WTC11 (cell line): ENCODE measurements at regions of chr2 and their contacts with region 1.

Region 1: DNA sequence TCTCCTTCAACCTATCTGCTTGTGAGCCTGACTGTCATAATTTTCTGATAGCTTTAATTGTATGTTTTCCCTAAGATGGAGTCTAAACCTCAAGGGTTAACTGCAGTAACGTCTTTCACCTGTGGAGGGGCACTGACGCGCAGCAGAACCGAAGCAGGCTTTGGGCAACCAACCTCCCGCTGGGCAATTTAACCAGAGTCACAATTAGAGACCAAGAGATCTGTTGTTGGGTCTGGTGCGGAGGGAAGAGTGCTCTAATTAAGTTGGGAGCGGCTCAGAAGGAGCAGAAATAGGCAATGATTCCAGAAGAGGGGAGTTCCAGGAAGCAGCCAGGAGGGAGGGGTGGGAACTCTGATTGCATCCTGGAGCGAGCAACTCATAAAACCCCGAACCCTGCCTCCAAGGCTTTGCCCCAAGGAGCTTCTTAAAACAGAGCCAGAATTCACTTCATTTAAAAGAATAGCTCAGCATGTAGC is 245.9 kb downstream of the PAX3 start:
- DNase-seq: peak; percentile 82
- ATAC-seq: peak; percentile 93
- H3K4me3 Mint-ChIP-seq: peak overlapping the region; percentile 29
- H3K27ac Mint-ChIP-seq: no peak overlapping the region
- H3K4me1 Mint-ChIP-seq: peaks cover 16% of the 10 kb centered on the region
- H3K27me3 Mint-ChIP-seq: peaks cover 100% of the 10 kb centered on the region
- CTCF ChIP-seq: peak; percentile 47

Region 2: GRCh38 chr2:222024932-222025880 is 27.7 kb before region 1 on chr2:
- CTCF ChIA-PET with region 1: interaction called, 36 read pairs
- POLR2A ChIA-PET with region 1: no interaction called
- DNase-seq: no peak
- ATAC-seq: peak; percentile 59
- H3K4me3 Mint-ChIP-seq: peak overlapping the region; percentile 42
- H3K27ac Mint-ChIP-seq: no peak overlapping the region
- H3K4me1 Mint-ChIP-seq: peaks cover 19% of the 10 kb centered on the region
- H3K27me3 Mint-ChIP-seq: peaks cover 70% of the 10 kb centered on the region
- CTCF ChIP-seq: peak; percentile 27; the same call in 1 of the 2 replicates

Region 3: GRCh38 chr2:222038067-222038802 is 14.7 kb before region 1 on chr2:
- CTCF ChIA-PET with region 1: interaction called, 42 read pairs
- POLR2A ChIA-PET with region 1: no interaction called
- DNase-seq: no peak
- ATAC-seq: no peak
- H3K4me3 Mint-ChIP-seq: no peak overlapping the region
- H3K27ac Mint-ChIP-seq: no peak overlapping the region
- H3K4me1 Mint-ChIP-seq: 0 out of 2 replicates have a peak, but pooled peaks cover 2% of the 10 kb centered on the region
- H3K27me3 Mint-ChIP-seq: peaks cover 12% of the 10 kb centered on the region
- CTCF ChIP-seq: no peak

Region 4: GRCh38 chr2:222283634-222284033 is 230.7 kb after region 1 on chr2:
- CTCF ChIA-PET with region 1: interaction called, 15 read pairs
- POLR2A ChIA-PET with region 1: no interaction called
- DNase-seq: peak; percentile 57
- ATAC-seq: peak; percentile 99
- H3K4me3 Mint-ChIP-seq: no peak overlapping the region
- H3K27ac Mint-ChIP-seq: no peak overlapping the region
- H3K4me1 Mint-ChIP-seq: peaks cover 10% of the 10 kb centered on the region
- H3K27me3 Mint-ChIP-seq: peaks cover 80% of the 10 kb centered on the region
- CTCF ChIP-seq: no peak

Region 5: GRCh38 chr2:222318026-222318711 is 265.2 kb after region 1 on chr2:
- CTCF ChIA-PET with region 1: interaction called, 20 read pairs
- POLR2A ChIA-PET with region 1: no interaction called
- DNase-seq: peak; percentile 83
- ATAC-seq: peak; percentile 74
- H3K4me3 Mint-ChIP-seq: peak overlapping the region; percentile 79
- H3K27ac Mint-ChIP-seq: no peak overlapping the region
- H3K4me1 Mint-ChIP-seq: peaks cover 11% of the 10 kb centered on the region
- H3K27me3 Mint-ChIP-seq: peaks cover 94% of the 10 kb centered on the region
- CTCF ChIP-seq: no peak

Region 6: GRCh38 chr2:222561817-222562645 is 509.1 kb after region 1 on chr2:
- CTCF ChIA-PET with region 1: interaction called, 16 read pairs
- POLR2A ChIA-PET with region 1: no interaction called
- DNase-seq: peak; percentile 56
- ATAC-seq: peak; percentile 93
- H3K4me3 Mint-ChIP-seq: no peak overlapping the region
- H3K27ac Mint-ChIP-seq: no peak overlapping the region
- H3K4me1 Mint-ChIP-seq: no peaks in the 10 kb centered on the region
- H3K27me3 Mint-ChIP-seq: peaks cover 15% of the 10 kb centered on the region
- CTCF ChIP-seq: peak; percentile 76